Psoas muscle (tissue), 8 donors: ENCODE measurements at regions of chr20 and their contacts with region 1.

Region 1: DNA sequence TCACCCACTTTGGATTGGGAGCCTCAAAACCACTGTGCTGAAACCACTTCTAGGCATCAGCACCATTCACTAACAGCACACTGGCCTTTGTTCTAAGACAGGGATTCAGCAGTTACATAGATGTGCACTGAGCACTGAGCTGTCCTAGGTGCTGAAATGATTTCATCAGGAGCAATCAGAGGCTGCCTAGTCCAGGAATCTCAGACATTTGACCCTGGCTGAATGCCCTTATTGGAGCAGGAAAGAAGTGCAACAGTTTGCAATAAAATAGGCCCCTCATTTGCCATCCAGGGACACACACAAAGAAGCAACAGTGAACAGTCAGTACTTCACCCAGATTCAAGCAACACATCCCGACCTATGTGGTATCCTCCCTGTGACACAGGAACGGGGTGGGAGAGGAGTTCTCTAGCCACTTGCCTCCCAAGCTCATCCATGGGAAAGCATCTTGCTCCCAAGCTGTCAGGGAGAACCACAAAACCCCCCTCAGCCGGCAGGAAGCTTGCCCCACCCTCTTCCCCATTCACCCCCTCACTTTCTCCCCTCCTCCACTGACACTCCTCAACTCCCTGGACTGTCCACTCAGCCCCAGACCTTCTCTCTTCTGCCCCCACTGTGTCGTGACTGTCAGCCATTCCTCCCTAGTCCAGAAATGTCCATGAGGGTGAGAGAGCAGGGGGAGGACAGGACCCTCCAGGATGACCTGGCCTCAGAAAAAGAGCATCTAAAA is 304.4 kb downstream of the PREX1 start:
- DNase-seq: no peak
- ATAC-seq: no peak
- H3K4me3 ChIP-seq: no peak overlapping the region
- H3K27ac ChIP-seq: no peak overlapping the region
- H3K4me1 ChIP-seq: no peaks in the 10 kb centered on the region
- H3K27me3 ChIP-seq: peaks cover 0 to 5% (median 0%) of the 10 kb centered on the region in 3 donors
- CTCF ChIP-seq: no peak

Region 2: DNA sequence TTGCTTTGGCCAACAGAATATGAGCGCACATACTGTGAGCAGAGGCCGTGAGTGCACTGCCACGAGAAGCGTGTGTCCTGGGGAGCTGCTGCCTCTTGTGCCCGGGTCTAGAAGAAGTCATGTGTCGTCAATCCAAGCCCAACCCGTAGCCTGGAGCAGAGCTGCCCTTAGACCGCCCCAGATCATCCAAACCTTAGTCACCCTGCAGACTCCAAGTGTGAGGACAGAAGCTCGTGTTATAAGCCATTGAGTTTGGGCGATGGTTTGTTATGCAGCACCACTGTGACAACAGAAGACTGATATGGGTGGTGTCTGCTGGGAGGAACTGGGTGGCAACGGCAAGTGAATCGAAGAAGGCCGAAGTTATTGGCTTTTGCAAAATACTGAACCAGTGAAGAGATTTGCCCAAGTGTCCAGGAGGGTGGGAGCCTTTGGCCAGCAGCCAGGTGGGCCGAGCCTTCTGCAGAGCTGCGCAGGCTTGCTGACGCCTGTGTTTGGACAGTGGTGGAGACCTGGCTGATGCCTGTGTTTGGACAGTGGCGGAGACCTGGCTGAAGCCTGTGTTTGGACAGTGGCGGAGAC is 636.8 kb before region 1 on chr20:
- intact Hi-C with region 1: loop called in 1 of 2 experiments (anchors 5 kb)
- DNase-seq: no peak
- ATAC-seq: no peak
- H3K4me3 ChIP-seq: no peak overlapping the region
- H3K27ac ChIP-seq: no peak overlapping the region
- H3K4me1 ChIP-seq: no peaks in the 10 kb centered on the region
- H3K27me3 ChIP-seq: peaks cover 0 to 1% (median 0%) of the 10 kb centered on the region in 3 donors
- CTCF ChIP-seq: no peak

Region 3: DNA sequence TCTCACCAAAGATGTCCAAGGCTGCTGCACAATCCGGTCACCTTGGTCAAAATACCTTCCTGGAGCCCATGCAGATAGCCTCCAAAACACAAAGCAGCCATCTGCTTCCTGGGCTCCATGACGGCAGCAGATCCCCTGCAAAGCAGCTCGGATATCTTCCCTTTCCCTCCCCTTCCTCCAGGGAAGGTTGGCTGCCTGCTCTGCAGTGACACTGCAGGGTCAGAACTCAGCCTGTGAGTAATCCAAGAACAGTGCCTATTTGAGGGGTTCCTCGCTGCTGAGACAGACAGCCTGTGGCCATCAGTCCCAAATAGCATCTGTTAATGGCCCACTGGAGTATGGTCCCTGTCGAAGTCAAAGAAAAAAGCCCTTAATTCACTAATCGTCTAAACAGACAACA is 33.6 kb after region 1 on chr20:
- intact Hi-C with region 1: no loop called
- DNase-seq: no peak
- ATAC-seq: no peak
- H3K4me3 ChIP-seq: no peak overlapping the region
- H3K27ac ChIP-seq: no peak overlapping the region
- H3K4me1 ChIP-seq: no peaks in the 10 kb centered on the region
- H3K27me3 ChIP-seq: peaks cover 0 to 5% (median 0%) of the 10 kb centered on the region in 3 donors
- CTCF ChIP-seq: no peak